Naive thymus-derived CD4-positive, alpha-beta T cell (primary cell): ENCODE measurements at regions of chr4 and their contacts with region 1.

Region 1: GRCh38 chr4:40228497-40229365 is 31.9 kb downstream of the RHOH start:
- DNase-seq: peak in 1 of 9 donors; percentile 23
- ATAC-seq: no peak
- H3K4me3 ChIP-seq: peak overlapping the region; percentile 21
- H3K4me3 Mint-ChIP-seq: peak overlapping the region; percentile 74 to 87 (median 81)
- H3K27ac ChIP-seq: peak overlapping the region; percentile 74
- H3K27ac Mint-ChIP-seq: peak overlapping the region; percentile 87 to 99 (median 97)
- H3K4me1 ChIP-seq: peaks cover 86 to 98% of the 10 kb centered on the region in 2 donors
- H3K4me1 Mint-ChIP-seq: peaks cover 58 to 100% (median 90%) of the 10 kb centered on the region in 7 donors
- H3K27me3 ChIP-seq: no peaks in the 10 kb centered on the region
- H3K27me3 Mint-ChIP-seq: no peaks in the 10 kb centered on the region

Region 2: GRCh38 chr4:40205259-40206198 is 23.2 kb before region 1 on chr4:
- CTCF ChIA-PET with region 1: interaction called, 5 read pairs
- POLR2A ChIA-PET with region 1: interaction called, 90 read pairs
- intact Hi-C with region 1: loop called (anchors 1 to 2 kb)
- DNase-seq: peak in 1 of 9 donors; percentile 44
- ATAC-seq: peak; percentile 66
- H3K4me3 ChIP-seq: peak overlapping the region; percentile 63
- H3K4me3 Mint-ChIP-seq: peak overlapping the region; percentile 91 to 100 (median 98)
- H3K27ac ChIP-seq: peak overlapping the region; percentile 100
- H3K27ac Mint-ChIP-seq: peak overlapping the region; percentile 94 to 100 (median 98)
- H3K4me1 ChIP-seq: peaks cover 24 to 40% of the 10 kb centered on the region in 2 donors
- H3K4me1 Mint-ChIP-seq: peaks cover 55 to 78% (median 67%) of the 10 kb centered on the region in 7 donors
- H3K27me3 ChIP-seq: no peaks in the 10 kb centered on the region
- H3K27me3 Mint-ChIP-seq: no peaks in the 10 kb centered on the region

Region 3: DNA sequence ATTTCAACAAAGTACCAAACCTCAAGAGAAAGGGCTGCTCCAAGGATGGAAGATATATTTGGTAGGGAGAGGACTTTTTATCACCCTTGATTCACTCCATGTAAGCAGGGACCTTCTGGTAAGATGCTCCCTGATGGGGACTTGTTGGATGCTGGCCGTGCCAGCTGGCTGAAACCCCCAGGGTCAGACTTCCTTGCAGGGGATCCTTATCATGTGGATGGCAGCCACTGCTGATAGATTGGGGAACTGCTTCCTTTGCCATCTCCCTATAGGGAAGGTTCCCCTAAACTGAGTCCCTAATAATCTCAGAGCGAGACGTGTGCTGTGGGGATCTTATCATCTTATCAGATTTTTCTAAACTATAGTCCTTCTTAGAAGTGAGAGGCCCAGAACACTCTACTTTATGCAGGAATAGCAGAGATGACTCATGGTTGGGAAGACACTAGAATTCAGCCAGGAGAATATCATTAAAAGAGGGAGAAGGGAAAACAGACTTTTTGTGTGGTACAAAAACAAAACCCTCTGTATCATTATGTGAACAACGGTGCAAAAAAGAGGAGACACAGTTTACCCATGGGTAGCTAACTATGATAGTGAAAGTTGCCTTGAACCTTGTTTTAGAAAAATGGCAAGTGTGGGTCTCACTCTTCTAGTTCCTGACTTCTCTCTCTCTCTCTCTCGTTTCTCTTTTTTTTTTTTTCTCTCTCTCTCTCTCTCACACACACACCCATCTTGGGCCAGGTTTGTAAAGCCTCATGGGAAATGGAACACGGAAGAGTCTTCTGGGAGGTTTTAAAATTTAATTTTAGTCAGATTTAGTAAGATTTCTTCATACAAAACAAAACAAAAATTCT is 15.8 kb before region 1 on chr4:
- CTCF ChIA-PET with region 1: interaction called, 8 read pairs
- POLR2A ChIA-PET with region 1: interaction called, 90 read pairs
- intact Hi-C with region 1: loop called in 1 of 2 experiments (anchors 2 kb)
- DNase-seq: no peak
- ATAC-seq: no peak
- H3K4me3 ChIP-seq: peak overlapping the region; percentile 41
- H3K4me3 Mint-ChIP-seq: peak overlapping the region; percentile 52 to 100 (median 76)
- H3K27ac ChIP-seq: peak overlapping the region; percentile 100
- H3K27ac Mint-ChIP-seq: peak overlapping the region; percentile 79 to 99 (median 94)
- H3K4me1 ChIP-seq: peaks cover 71 to 87% of the 10 kb centered on the region in 2 donors
- H3K4me1 Mint-ChIP-seq: peaks cover 76 to 99% (median 90%) of the 10 kb centered on the region in 7 donors
- H3K27me3 ChIP-seq: no peaks in the 10 kb centered on the region
- H3K27me3 Mint-ChIP-seq: no peaks in the 10 kb centered on the region

Region 4: DNA sequence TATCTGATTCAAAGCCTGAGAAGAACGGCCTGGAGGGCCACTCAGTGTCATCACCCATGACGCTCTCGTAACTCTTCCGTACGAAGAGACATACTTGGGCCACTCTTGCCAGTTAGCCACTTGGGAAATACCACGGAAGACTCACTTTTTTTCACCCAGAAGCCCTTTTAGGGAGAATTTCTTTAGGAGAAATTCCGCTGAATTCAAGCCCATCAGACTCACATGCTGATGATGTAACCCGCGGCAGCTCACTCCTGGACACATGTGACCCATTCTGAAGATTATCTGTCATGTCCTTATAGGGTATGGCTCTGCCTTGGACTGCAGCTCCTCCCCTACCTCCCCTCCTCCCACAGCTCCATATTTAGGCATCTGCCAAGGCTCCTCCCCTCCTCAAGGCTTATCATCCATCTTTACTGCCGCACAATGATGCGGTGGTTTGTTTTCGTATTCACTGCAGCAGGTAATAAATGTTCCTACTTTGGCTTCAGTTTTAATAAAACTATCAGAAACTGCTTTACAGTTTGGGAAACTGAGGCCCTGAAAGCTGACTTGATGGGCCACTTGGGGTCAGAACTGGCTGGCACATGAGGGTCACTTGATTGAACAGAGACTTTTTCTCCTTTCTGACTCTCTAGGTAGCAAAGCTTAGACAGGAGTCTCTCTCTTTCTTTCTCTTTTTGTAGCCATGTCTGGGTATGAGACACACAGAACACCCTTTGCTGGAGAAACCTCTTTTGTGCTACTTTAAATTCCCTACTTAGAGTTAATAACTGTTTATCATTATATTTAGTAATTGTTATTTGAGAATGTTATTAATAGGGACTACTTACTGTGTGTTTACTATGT is 10.2 kb after region 1 on chr4:
- CTCF ChIA-PET with region 1: interaction called, 5 read pairs
- POLR2A ChIA-PET with region 1: interaction called, 20 read pairs
- intact Hi-C with region 1: loop called (anchors 1 kb)
- DNase-seq: peak in 8 of 9 donors; percentile 54 to 90 (median 75)
- ATAC-seq: peak; percentile 94
- H3K4me3 ChIP-seq: peak overlapping the region; percentile 49
- H3K4me3 Mint-ChIP-seq: peak overlapping the region; percentile 64 to 87 (median 79)
- H3K27ac ChIP-seq: peak overlapping the region; percentile 79
- H3K27ac Mint-ChIP-seq: peak overlapping the region; percentile 89 to 98 (median 94)
- H3K4me1 ChIP-seq: peaks cover 81 to 90% of the 10 kb centered on the region in 2 donors
- H3K4me1 Mint-ChIP-seq: peaks cover 54 to 97% (median 94%) of the 10 kb centered on the region in 7 donors
- H3K27me3 ChIP-seq: no peaks in the 10 kb centered on the region
- H3K27me3 Mint-ChIP-seq: no peaks in the 10 kb centered on the region

Region 5: GRCh38 chr4:40247350-40247749 is 18.6 kb after region 1 on chr4:
- CTCF ChIA-PET with region 1: interaction called, 5 read pairs
- POLR2A ChIA-PET with region 1: interaction called, 20 read pairs
- intact Hi-C with region 1: loop called in 1 of 2 experiments (anchors 1 kb)
- DNase-seq: peak in 7 of 9 donors; percentile 68 to 75 (median 73)
- ATAC-seq: peak; percentile 83
- H3K4me3 ChIP-seq: peak overlapping the region; percentile 14
- H3K4me3 Mint-ChIP-seq: peak overlapping the region; percentile 37 to 83 (median 69)
- H3K27ac ChIP-seq: peak overlapping the region; percentile 78
- H3K27ac Mint-ChIP-seq: peak overlapping the region; percentile 84 to 99 (median 96)
- H3K4me1 ChIP-seq: peaks cover 61 to 82% of the 10 kb centered on the region in 2 donors
- H3K4me1 Mint-ChIP-seq: peaks cover 53 to 93% (median 84%) of the 10 kb centered on the region in 7 donors
- H3K27me3 ChIP-seq: no peaks in the 10 kb centered on the region
- H3K27me3 Mint-ChIP-seq: no peaks in the 10 kb centered on the region

Region 6: GRCh38 chr4:40283968-40284367 is 55.2 kb after region 1 on chr4:
- CTCF ChIA-PET with region 1: interaction called, 4 read pairs
- POLR2A ChIA-PET with region 1: interaction called, 14 read pairs
- intact Hi-C with region 1: no loop called
- DNase-seq: peak in 8 of 9 donors; percentile 60 to 93 (median 81)
- ATAC-seq: peak; percentile 98
- H3K4me3 ChIP-seq: peak overlapping the region; percentile 18
- H3K4me3 Mint-ChIP-seq: peak overlapping the region; percentile 57 to 81 (median 72)
- H3K27ac ChIP-seq: peak overlapping the region; percentile 70
- H3K27ac Mint-ChIP-seq: peak overlapping the region in 8 of 9 donors; percentile 89 to 99 (median 96)
- H3K4me1 ChIP-seq: peaks cover 38 to 40% of the 10 kb centered on the region in 2 donors
- H3K4me1 Mint-ChIP-seq: peaks cover 30 to 85% (median 80%) of the 10 kb centered on the region in 7 donors
- H3K27me3 ChIP-seq: no peaks in the 10 kb centered on the region
- H3K27me3 Mint-ChIP-seq: no peaks in the 10 kb centered on the region

Region 7: GRCh38 chr4:40316782-40317635 is 88.3 kb after region 1 on chr4:
- CTCF ChIA-PET with region 1: interaction called, 8 read pairs
- POLR2A ChIA-PET with region 1: interaction called, 63 read pairs
- intact Hi-C with region 1: loop called in 1 of 2 experiments (anchors 1 kb)
- DNase-seq: peak; percentile 39 to 83 (median 76)
- ATAC-seq: peak; percentile 81
- H3K4me3 ChIP-seq: peak overlapping the region; percentile 75
- H3K4me3 Mint-ChIP-seq: peak overlapping the region; percentile 79 to 93 (median 86)
- H3K27ac ChIP-seq: peak overlapping the region; percentile 92
- H3K27ac Mint-ChIP-seq: peak overlapping the region; percentile 90 to 99 (median 99)
- H3K4me1 ChIP-seq: peaks cover 7 to 19% of the 10 kb centered on the region in 2 donors
- H3K4me1 Mint-ChIP-seq: peaks cover 23 to 71% (median 61%) of the 10 kb centered on the region in 7 donors
- H3K27me3 ChIP-seq: no peaks in the 10 kb centered on the region
- H3K27me3 Mint-ChIP-seq: no peaks in the 10 kb centered on the region